Aorta (tissue), 5 donors: ENCODE measurements at regions of chr6 and their contacts with region 1.

Region 1: GRCh38 chr6:107674995-107675738 is 148.9 kb downstream of the SCML4 start:
- DNase-seq: peak; percentile 92 to 95
- ATAC-seq: peak; percentile 93
- H3K4me3 ChIP-seq: no peak overlapping the region
- H3K27ac ChIP-seq: no peak overlapping the region
- H3K4me1 ChIP-seq: no peaks in the 10 kb centered on the region
- H3K27me3 ChIP-seq: no peaks in the 10 kb centered on the region

Region 2: GRCh38 chr6:107413966-107414645 is 261.1 kb before region 1 on chr6:
- intact Hi-C with region 1: no loop called
- DNase-seq: no peak
- ATAC-seq: no peak
- H3K4me3 ChIP-seq: no peak overlapping the region
- H3K27ac ChIP-seq: no peak overlapping the region
- H3K4me1 ChIP-seq: peaks cover 2 to 5% of the 10 kb centered on the region in 2 donors
- H3K27me3 ChIP-seq: no peaks in the 10 kb centered on the region

Region 3: GRCh38 chr6:107704347-107705013 is 29.3 kb after region 1 on chr6:
- intact Hi-C with region 1: loop called in 1 of 2 experiments (anchors 1 kb)
- DNase-seq: no peak
- ATAC-seq: no peak
- H3K4me3 ChIP-seq: no peak overlapping the region
- H3K27ac ChIP-seq: no peak overlapping the region
- H3K4me1 ChIP-seq: no peaks in the 10 kb centered on the region
- H3K27me3 ChIP-seq: no peaks in the 10 kb centered on the region

Region 4: DNA sequence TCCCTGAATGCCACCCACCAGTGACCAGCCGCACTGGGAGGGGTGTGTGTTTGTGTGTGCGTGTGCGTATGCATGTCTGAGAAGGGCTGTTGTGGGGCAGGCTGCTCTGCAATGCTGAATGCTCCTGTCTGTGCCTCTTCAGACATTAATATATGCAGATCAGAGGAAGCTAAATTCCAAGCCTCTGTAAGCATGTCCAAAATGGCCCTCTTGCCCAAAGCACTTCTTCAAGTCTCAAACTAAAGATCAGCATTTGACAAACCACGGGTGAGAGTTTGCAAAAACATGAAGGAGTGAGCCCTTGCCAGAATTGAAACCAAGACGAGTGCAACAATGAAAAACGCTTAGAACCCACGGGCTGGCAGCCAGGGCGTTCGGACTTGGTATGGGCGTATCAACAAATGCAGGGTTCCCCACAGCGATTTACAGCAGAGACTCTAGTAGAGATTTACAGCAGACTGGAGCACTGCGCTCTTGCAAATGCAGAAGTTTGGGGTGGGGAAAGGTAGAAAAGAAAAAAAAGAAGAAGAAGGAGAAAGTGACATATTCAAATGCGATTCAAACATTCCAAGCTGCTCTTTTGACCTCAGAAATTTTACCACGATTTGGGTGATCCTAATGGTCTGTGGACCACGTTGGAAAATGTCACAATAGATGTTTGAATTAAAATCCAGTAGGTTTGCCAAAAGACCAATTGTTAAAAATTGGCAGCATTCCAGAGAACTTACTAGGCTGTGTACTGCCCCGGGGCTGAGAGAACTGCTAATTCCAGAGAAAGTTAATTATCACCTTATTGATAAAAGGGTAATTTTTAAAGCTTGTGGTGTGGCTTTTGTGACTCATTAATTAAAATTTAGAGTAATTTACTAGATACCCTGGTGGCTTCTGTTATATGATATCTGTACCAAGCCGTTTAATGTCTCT is 145.4 kb after region 1 on chr6:
- intact Hi-C with region 1: no loop called
- DNase-seq: no peak
- ATAC-seq: no peak
- H3K4me3 ChIP-seq: peak overlapping the region in 1 of 2 donors; percentile 5
- H3K27ac ChIP-seq: no peak overlapping the region
- H3K4me1 ChIP-seq: no peaks in the 10 kb centered on the region
- H3K27me3 ChIP-seq: no peaks in the 10 kb centered on the region

Region 5: GRCh38 chr6:107847844-107848802 is 173.0 kb after region 1 on chr6:
- intact Hi-C with region 1: loop called (anchors 1 to 10 kb)
- DNase-seq: peak; percentile 88 to 95
- ATAC-seq: peak; percentile 95
- H3K4me3 ChIP-seq: peak overlapping the region; percentile 0 to 23
- H3K27ac ChIP-seq: no peak overlapping the region
- H3K4me1 ChIP-seq: no peaks in the 10 kb centered on the region
- H3K27me3 ChIP-seq: no peaks in the 10 kb centered on the region